Heart left ventricle (tissue), 16 donors: ENCODE measurements at regions of chr1 and their contacts with region 1.

Region 1: DNA sequence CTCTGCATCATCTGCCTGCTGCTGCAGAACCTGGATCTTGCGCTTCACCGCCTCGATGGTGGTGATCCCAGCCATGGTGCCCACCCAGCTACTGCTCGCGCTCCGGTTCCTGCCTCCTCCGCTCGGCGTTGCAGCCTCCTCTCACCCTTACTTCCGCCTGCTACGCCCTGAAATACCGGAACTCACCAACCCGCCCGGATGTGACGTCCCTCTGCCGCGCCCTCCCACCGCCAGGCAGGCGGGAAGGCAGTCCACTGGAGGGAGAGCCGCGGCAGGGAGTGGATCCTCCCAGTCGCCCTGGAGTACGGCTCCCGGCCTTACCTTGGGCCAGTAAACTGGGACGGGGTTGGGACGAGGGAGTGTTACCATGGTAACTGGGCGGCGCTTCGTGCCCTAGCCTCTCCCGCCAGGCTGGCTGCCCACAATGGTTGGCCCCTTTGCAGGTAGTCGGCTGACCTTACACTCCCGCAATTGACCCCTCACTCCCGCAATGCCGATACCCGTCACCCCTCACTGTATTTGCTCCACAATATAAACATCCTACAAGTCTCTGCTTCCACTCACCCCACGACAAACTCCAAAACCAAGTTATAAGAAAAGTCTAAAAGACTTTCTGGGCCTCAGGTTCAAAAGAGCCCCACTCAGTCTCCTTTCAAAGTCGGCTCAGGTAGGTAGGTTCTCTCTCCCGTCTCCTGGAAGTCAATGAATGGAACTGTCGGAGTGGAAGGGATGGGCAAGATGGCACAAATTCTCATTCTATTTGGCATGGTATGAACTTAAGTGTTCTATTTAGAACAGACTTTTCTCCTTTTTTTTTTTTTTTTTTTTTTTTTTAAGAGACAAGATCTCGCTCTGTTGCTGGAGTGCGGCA is 8.6 kb downstream of the TPM3 start:
- DNase-seq: peak; percentile 95 to 97 (median 96)
- ATAC-seq: peak; percentile 95 to 98 (median 97)
- H3K4me3 ChIP-seq: peak overlapping the region; percentile 84 to 100 (median 96)
- H3K27ac ChIP-seq: peak overlapping the region; percentile 19 to 98 (median 94)
- H3K4me1 ChIP-seq: peaks cover 8 to 47% (median 42%) of the 10 kb centered on the region in 12 donors
- H3K27me3 ChIP-seq: no peaks in the 10 kb centered on the region
- CTCF ChIP-seq: peak in 3 of 12 donors; percentile 16 to 24 (median 18)
- POLR2A ChIP-seq: peak; percentile 18 to 97

Region 2: DNA sequence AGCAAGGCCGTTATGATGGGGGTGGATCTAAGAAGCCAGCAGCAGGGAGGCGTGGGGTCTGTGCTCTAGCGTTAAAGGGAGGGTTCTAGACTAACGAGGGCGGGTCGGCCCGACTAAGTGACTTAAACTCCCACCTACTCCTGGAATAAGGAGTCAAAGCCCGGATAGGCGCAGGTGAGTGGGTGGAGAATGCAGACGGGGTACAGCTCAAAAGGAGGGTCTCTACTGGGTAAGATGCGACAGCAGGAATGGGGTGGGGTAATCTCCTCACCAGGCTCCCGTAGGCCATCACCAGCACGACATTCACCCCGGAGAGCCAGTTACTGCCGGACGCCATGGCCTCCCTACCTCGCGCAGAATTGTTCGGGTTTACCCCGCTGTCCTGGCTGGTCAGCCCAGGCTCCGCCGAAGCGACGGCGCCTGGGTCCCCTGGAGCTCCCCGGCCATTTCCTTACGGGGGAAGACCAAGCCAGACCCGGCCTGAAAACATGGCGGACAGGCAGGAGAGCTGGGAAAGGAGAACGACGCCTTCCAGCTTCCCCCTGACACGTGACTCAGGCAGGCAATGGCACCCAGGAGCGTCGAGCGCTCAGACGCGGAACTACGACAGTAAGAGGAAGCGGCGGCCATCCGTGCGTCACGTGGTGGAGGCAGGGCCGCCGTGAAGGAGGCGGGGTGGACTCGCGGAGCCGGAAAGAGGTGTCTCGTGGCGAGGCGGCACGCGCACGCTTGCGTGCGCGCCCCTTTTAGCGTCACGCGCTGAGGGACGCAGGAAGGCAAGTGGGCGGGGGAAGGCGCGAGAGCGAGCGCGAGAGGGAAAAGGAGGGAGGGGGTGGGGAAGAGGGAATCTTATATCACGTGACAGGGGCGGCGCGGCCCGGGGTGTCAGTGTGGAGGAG is 37.0 kb after region 1 on chr1 and contains the start of gene UBAP2L:
- intact Hi-C with region 1: loop called in 1 of 10 experiments (anchors 2 kb)
- DNase-seq: peak; percentile 99 to 100 (median 99)
- ATAC-seq: peak; percentile 97 to 99 (median 98)
- H3K4me3 ChIP-seq: peak within 1 kb of the TSS; percentile 65 to 97 (median 82)
- H3K27ac ChIP-seq: peak within 1 kb of the TSS; percentile 95 to 100 (median 98)
- H3K4me1 ChIP-seq: peaks cover 7 to 61% (median 51%) of the 10 kb centered on the region in 12 donors
- H3K27me3 ChIP-seq: no peaks in the 10 kb centered on the region
- CTCF ChIP-seq: peak in 1 of 12 donors; percentile 3
- POLR2A ChIP-seq: peak; percentile 19 to 61
- total RNA-seq, gene UBAP2L: 57.4 to 142 (median 100) TPM